ENCODE measurements at regions of chr3 and their contacts with region 1.

Region 1: GRCh38 chr3:136075218-136075808 is 109.8 kb downstream of the PPP2R3A start:
- DNase-seq: peak; percentile 80
- H3K4me3 ChIP-seq: no peak overlapping the region
- H3K27ac ChIP-seq: peak overlapping the region in 2 of 4 donors; percentile 26 to 38
- H3K4me1 ChIP-seq: peaks cover 0 to 26% (median 12%) of the 10 kb centered on the region in 4 donors
- H3K27me3 ChIP-seq: no peaks in the 10 kb centered on the region
- CTCF ChIP-seq: peak; percentile 75 to 93 (median 84)
- EP300 ChIP-seq: no peak
- POLR2A ChIP-seq: no peak

Region 2: DNA sequence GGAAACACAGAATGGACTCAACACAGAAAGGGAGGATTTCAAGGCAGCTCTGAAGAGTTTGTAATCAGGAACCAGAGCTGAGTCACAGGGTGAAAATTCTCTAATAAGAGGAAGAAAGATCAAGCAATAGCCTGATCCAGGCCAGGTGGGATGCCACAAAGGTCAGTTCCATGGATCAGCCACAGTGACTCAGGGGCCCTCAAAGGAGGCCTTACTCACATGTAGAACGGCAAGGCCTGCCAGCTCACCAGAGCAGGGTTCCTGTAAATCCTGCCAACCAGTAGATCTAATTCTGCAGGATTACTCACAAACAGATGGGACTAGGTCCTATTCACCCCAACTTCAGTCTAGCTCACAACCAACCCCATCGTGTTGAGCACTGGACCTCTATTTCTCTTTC is 188.1 kb before region 1 on chr3:
- intact Hi-C with region 1: no loop called
- DNase-seq: no peak
- H3K4me3 ChIP-seq: no peak overlapping the region
- H3K27ac ChIP-seq: no peak overlapping the region
- H3K4me1 ChIP-seq: no peaks in the 10 kb centered on the region
- H3K27me3 ChIP-seq: no peaks in the 10 kb centered on the region
- CTCF ChIP-seq: no peak
- EP300 ChIP-seq: no peak
- POLR2A ChIP-seq: no peak

Region 3: DNA sequence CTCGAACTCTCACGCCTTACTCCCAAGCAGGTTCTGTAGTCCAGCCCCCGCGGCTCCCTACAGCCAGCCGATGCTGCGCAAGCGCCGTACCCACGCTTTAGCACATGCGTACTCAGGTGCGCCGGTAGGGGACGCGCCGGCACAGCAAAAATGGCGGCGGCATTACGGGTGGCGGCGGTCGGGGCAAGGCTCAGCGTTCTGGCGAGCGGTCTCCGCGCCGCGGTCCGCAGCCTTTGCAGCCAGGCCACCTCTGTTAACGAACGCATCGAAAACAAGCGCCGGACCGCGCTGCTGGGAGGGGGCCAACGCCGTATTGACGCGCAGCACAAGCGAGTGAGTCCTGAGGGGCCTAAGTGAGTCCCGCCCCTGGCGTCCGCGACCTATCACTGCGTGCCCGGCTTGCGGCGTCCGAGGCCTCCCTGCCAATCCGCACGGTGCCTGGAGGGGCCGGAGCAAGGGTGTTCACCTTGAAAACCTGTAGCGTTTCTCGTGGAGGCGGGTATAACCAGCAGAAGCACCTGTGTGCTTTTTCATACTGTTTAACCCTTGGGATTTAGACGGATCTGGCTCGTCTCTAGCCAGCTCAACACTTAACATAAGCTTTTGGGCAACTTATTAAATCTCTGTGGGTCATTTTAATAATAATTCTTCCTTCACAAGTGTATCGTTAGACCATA is 175.1 kb after region 1 on chr3 and contains the start of gene PCCB:
- intact Hi-C with region 1: loop called (anchors 2 kb)
- DNase-seq: peak; percentile 97
- H3K4me3 ChIP-seq: peak within 1 kb of the TSS; percentile 66 to 72 (median 68)
- H3K27ac ChIP-seq: peak within 1 kb of the TSS; percentile 89 to 93 (median 92)
- H3K4me1 ChIP-seq: peaks cover 0 to 18% (median 15%) of the 10 kb centered on the region in 4 donors
- H3K27me3 ChIP-seq: no peaks in the 10 kb centered on the region
- CTCF ChIP-seq: peak; percentile 80 to 97 (median 96)
- EP300 ChIP-seq: no peak
- POLR2A ChIP-seq: peak; percentile 15 to 23
- total RNA-seq, gene PCCB: 24.8 to 33.9 (median 29.0) TPM

Region 4: GRCh38 chr3:136343446-136344281 is 268.4 kb after region 1 on chr3:
- intact Hi-C with region 1: loop called (anchors 10 kb)
- DNase-seq: peak; percentile 95
- H3K4me3 ChIP-seq: no peak overlapping the region
- H3K27ac ChIP-seq: peak overlapping the region in 3 of 4 donors; percentile 55 to 71 (median 70)
- H3K4me1 ChIP-seq: peaks cover 0 to 21% (median 15%) of the 10 kb centered on the region in 4 donors
- H3K27me3 ChIP-seq: no peaks in the 10 kb centered on the region
- CTCF ChIP-seq: no peak
- EP300 ChIP-seq: peak in 2 of 4 donors; percentile 24 to 26
- POLR2A ChIP-seq: no peak